ENCODE measurements at regions of chr14 and their contacts with region 1.

Region 1: DNA sequence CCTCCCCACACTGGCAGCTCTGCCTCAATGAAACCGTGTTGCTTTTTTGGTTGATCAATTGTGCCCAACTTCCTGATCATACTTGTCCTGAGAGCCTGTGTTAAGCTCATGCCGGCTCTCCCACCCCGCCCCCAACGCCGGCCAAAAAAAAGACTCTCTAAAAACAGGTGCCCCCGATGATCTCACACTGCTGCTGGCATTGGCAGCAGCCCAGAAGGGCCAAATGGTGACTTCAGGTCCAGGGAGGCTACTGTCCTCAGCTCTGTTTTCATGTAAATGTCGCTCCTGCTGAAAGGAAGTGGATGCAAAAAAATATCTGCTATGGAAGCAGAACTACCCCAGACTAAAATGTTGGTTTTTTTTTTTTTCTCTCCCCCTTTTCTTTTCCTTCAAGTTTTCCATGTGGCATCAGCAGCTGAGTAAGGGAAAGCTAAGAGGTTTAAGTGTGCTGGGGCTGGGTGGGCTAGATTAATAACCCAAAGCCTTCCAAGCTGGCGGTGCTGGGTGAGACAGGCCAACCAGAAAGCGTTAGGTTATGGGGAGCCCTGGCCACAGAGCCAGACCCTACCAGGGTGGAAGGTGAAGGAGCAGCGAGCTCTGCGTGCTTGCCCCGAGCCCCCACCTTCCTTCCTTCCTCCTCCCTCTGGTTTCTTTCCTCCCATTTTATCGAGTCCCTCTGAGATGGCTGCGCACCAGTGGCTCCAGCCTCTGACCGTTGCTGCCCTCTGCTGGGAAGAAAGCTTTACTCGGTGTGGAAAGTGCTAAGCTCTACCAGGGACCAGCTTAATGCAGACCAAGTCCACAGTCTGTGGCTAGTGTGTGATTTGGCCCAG is 396.1 kb downstream of the NRXN3 start:
- DNase-seq: no peak
- H3K4me3 ChIP-seq: peak overlapping the region in 5 of 8 donors; percentile 2 to 51 (median 6)
- H3K27ac ChIP-seq: no peak overlapping the region
- H3K4me1 ChIP-seq: peaks cover 0 to 12% (median 4%) of the 10 kb centered on the region in 6 donors
- H3K27me3 ChIP-seq: no peaks in the 10 kb centered on the region
- CTCF ChIP-seq: peak in 10 of 11 experiments; percentile 18 to 74 (median 52)
- POLR2A ChIP-seq: no peak

Region 2: GRCh38 chr14:77862154-77862786 is 704.0 kb before region 1 on chr14:
- intact Hi-C with region 1: loop called (anchors 10 kb)
- DNase-seq: peak; percentile 91
- H3K4me3 ChIP-seq: no peak overlapping the region
- H3K27ac ChIP-seq: no peak overlapping the region
- H3K4me1 ChIP-seq: no peaks in the 10 kb centered on the region
- H3K27me3 ChIP-seq: no peaks in the 10 kb centered on the region
- CTCF ChIP-seq: peak; percentile 67 to 96 (median 92)
- POLR2A ChIP-seq: no peak

Region 3: DNA sequence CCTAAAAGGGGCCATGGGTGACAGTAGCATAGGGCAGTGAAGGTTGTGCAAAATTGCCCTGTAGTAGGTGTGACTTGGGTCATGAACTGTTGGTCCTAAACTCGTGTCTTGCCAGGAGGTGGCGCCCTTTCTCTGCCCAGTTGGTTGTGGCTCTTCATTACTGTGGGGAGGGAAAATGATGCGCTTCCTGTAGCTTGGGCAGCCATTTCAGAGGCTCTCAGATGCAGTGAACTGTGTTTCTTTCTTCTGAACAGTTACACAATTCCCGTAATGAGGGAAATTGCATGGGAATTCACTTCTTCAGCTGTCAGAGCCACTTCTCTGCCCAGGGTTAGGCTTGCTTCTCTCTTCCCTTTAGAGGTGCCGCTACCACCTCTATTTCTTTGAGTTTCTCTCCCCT is 544.2 kb before region 1 on chr14:
- intact Hi-C with region 1: loop called (anchors 5 kb)
- DNase-seq: no peak
- H3K4me3 ChIP-seq: no peak overlapping the region
- H3K27ac ChIP-seq: no peak overlapping the region
- H3K4me1 ChIP-seq: no peaks in the 10 kb centered on the region
- H3K27me3 ChIP-seq: no peaks in the 10 kb centered on the region
- CTCF ChIP-seq: peak in 6 of 11 experiments; percentile 17 to 40 (median 34)
- POLR2A ChIP-seq: no peak

Measured in spleen (tissue), 13 donors.